ENCODE measurements at regions of chr3 and their contacts with region 1.

Region 1: GRCh38 chr3:194404365-194405140 is 5.5 kb upstream of the GP5 start:
- DNase-seq: peak in 7 of 9 donors; percentile 47 to 71 (median 65)
- ATAC-seq: peak; percentile 80
- H3K4me3 ChIP-seq: no peak overlapping the region
- H3K4me3 Mint-ChIP-seq: peak overlapping the region in 7 of 10 donors; percentile 1 to 76 (median 43)
- H3K27ac ChIP-seq: no peak overlapping the region
- H3K27ac Mint-ChIP-seq: peak overlapping the region in 4 of 9 donors; percentile 1 to 9 (median 3)
- H3K4me1 ChIP-seq: peaks cover 0 to 7% of the 10 kb centered on the region in 2 donors
- H3K4me1 Mint-ChIP-seq: peaks cover 7 to 17% (median 16%) of the 10 kb centered on the region in 7 donors
- H3K27me3 ChIP-seq: no peaks in the 10 kb centered on the region
- H3K27me3 Mint-ChIP-seq: no peaks in the 10 kb centered on the region

Region 2: GRCh38 chr3:192566706-192567290 is 1837.8 kb before region 1 on chr3:
- CTCF ChIA-PET with region 1: no interaction called
- POLR2A ChIA-PET with region 1: no interaction called
- intact Hi-C with region 1: loop called in 1 of 2 experiments (anchors 10 kb)
- DNase-seq: peak in 8 of 9 donors; percentile 10 to 54 (median 36)
- ATAC-seq: peak; percentile 55
- H3K4me3 ChIP-seq: no peak overlapping the region
- H3K4me3 Mint-ChIP-seq: no peak overlapping the region
- H3K27ac ChIP-seq: no peak overlapping the region
- H3K27ac Mint-ChIP-seq: no peak overlapping the region
- H3K4me1 ChIP-seq: no peaks in the 10 kb centered on the region
- H3K4me1 Mint-ChIP-seq: peaks cover 0 to 10% (median 9%) of the 10 kb centered on the region in 7 donors
- H3K27me3 ChIP-seq: no peaks in the 10 kb centered on the region
- H3K27me3 Mint-ChIP-seq: peaks cover 17 to 31% (median 23%) of the 10 kb centered on the region in 5 donors

Region 3: GRCh38 chr3:193780810-193781472 is 623.6 kb before region 1 on chr3:
- CTCF ChIA-PET with region 1: no interaction called
- POLR2A ChIA-PET with region 1: no interaction called
- intact Hi-C with region 1: loop called in 1 of 2 experiments (anchors 5 kb)
- DNase-seq: peak in 2 of 9 donors; percentile 4 to 13
- ATAC-seq: no peak
- H3K4me3 ChIP-seq: no peak overlapping the region
- H3K4me3 Mint-ChIP-seq: no peak overlapping the region
- H3K27ac ChIP-seq: no peak overlapping the region
- H3K27ac Mint-ChIP-seq: peak overlapping the region in 1 of 9 donors; percentile 45
- H3K4me1 ChIP-seq: peaks cover 0 to 5% of the 10 kb centered on the region in 2 donors
- H3K4me1 Mint-ChIP-seq: peaks cover 4 to 35% (median 9%) of the 10 kb centered on the region in 7 donors
- H3K27me3 ChIP-seq: peaks cover 0 to 3% of the 10 kb centered on the region in 2 donors
- H3K27me3 Mint-ChIP-seq: peaks cover 21 to 60% (median 37%) of the 10 kb centered on the region in 5 donors

Region 4: GRCh38 chr3:194184265-194184751 is 220.2 kb before region 1 on chr3:
- CTCF ChIA-PET with region 1: no interaction called
- POLR2A ChIA-PET with region 1: no interaction called
- intact Hi-C with region 1: no loop called
- DNase-seq: no peak
- ATAC-seq: no peak
- H3K4me3 ChIP-seq: no peak overlapping the region
- H3K4me3 Mint-ChIP-seq: no peak overlapping the region
- H3K27ac ChIP-seq: no peak overlapping the region
- H3K27ac Mint-ChIP-seq: no peak overlapping the region
- H3K4me1 ChIP-seq: no peaks in the 10 kb centered on the region
- H3K4me1 Mint-ChIP-seq: peaks cover 0 to 12% (median 0%) of the 10 kb centered on the region in 7 donors
- H3K27me3 ChIP-seq: no peaks in the 10 kb centered on the region
- H3K27me3 Mint-ChIP-seq: peaks cover 0 to 8% (median 0%) of the 10 kb centered on the region in 5 donors

Region 5: GRCh38 chr3:194344012-194344411 is 60.5 kb before region 1 on chr3:
- CTCF ChIA-PET with region 1: interaction called, 256 read pairs
- POLR2A ChIA-PET with region 1: interaction called, 3 read pairs
- intact Hi-C with region 1: loop called (anchors 2 kb)
- DNase-seq: peak; percentile 36 to 74 (median 59)
- ATAC-seq: peak; percentile 82
- H3K4me3 ChIP-seq: no peak overlapping the region
- H3K4me3 Mint-ChIP-seq: no peak overlapping the region
- H3K27ac ChIP-seq: no peak overlapping the region
- H3K27ac Mint-ChIP-seq: no peak overlapping the region
- H3K4me1 ChIP-seq: no peaks in the 10 kb centered on the region
- H3K4me1 Mint-ChIP-seq: peaks cover 0 to 5% (median 0%) of the 10 kb centered on the region in 7 donors
- H3K27me3 ChIP-seq: no peaks in the 10 kb centered on the region
- H3K27me3 Mint-ChIP-seq: peaks cover 0 to 7% (median 7%) of the 10 kb centered on the region in 5 donors

Region 6: DNA sequence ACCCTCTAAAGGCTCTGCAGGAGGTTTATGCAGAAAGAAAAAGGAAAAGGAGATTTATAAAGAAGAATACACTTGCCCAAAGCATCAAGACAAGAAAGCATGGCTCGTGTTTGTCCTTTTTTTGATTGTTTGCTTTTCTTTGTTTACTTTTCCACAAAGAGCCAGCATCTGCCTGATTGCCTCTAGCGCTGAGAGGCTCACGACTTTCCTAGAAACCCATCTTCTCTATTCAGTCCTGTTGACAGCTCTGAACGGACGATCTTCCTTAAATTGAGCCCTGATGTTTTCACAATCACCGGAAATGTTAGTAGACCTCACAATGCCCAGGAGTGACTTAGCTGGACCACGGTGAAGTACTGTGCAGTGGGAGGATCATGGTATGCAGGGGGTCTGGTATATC is 17.9 kb before region 1 on chr3:
- CTCF ChIA-PET with region 1: no interaction called
- POLR2A ChIA-PET with region 1: no interaction called
- intact Hi-C with region 1: no loop called
- DNase-seq: no peak
- ATAC-seq: no peak
- H3K4me3 ChIP-seq: no peak overlapping the region
- H3K4me3 Mint-ChIP-seq: no peak overlapping the region
- H3K27ac ChIP-seq: no peak overlapping the region
- H3K27ac Mint-ChIP-seq: no peak overlapping the region
- H3K4me1 ChIP-seq: no peaks in the 10 kb centered on the region
- H3K4me1 Mint-ChIP-seq: peaks cover 0 to 10% (median 0%) of the 10 kb centered on the region in 7 donors
- H3K27me3 ChIP-seq: no peaks in the 10 kb centered on the region
- H3K27me3 Mint-ChIP-seq: peaks cover 0 to 26% (median 0%) of the 10 kb centered on the region in 5 donors

Region 7: DNA sequence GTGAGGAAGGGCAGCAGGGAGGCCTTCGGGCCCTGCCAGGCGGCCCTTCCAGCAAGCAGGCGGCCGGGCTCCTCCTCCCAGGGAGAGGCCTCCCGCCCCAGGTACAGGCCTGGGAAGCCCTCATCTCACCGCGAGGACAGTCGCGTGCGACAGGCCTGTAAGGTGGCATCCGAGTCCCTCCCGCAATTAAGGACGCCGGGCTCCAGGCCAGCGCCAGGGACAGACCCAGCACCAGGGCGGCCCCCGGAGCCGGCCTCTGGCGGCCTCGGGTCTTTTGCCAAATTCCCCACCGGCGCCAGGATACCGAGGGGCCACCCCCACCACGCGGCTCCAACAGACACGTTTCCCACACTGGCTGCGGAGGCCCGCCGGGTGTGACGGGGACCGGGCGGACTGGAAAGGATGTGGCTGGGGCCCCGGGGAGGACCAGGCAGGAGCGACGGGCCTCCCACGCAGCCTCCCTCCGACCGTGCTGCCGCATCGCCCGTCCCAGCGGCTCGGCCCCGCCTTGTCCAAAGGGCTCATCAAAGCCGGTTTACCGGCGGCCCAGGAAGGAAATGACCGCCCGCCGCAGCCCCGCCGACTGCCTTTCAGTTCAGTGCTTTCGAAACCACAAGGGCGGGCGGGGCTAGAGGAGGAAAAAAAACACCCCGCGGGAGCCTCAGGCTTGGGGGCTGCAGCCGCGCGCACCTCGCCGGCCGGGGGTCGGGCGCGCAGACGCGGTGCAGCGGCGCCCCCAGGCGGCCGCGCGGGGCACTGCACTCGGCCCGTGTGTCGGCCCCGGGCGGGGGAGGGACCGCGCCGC is 855.1 kb after region 1 on chr3:
- CTCF ChIA-PET with region 1: no interaction called
- POLR2A ChIA-PET with region 1: no interaction called
- intact Hi-C with region 1: loop called in 1 of 2 experiments (anchors 10 kb)
- DNase-seq: peak; percentile 80 to 90 (median 84)
- ATAC-seq: peak; percentile 94
- H3K4me3 ChIP-seq: peak overlapping the region; percentile 36
- H3K4me3 Mint-ChIP-seq: peak overlapping the region; percentile 32 to 84 (median 64)
- H3K27ac ChIP-seq: peak overlapping the region; percentile 73
- H3K27ac Mint-ChIP-seq: peak overlapping the region in 7 of 9 donors; percentile 46 to 88 (median 84)
- H3K4me1 ChIP-seq: peaks cover 17 to 19% of the 10 kb centered on the region in 2 donors
- H3K4me1 Mint-ChIP-seq: peaks cover 13 to 24% (median 19%) of the 10 kb centered on the region in 7 donors
- H3K27me3 ChIP-seq: no peaks in the 10 kb centered on the region
- H3K27me3 Mint-ChIP-seq: no peaks in the 10 kb centered on the region

Measured in naive thymus-derived CD4-positive, alpha-beta T cell (primary cell).